ENCODE measurements at regions of chr7 and their contacts with region 1.

Region 1: DNA sequence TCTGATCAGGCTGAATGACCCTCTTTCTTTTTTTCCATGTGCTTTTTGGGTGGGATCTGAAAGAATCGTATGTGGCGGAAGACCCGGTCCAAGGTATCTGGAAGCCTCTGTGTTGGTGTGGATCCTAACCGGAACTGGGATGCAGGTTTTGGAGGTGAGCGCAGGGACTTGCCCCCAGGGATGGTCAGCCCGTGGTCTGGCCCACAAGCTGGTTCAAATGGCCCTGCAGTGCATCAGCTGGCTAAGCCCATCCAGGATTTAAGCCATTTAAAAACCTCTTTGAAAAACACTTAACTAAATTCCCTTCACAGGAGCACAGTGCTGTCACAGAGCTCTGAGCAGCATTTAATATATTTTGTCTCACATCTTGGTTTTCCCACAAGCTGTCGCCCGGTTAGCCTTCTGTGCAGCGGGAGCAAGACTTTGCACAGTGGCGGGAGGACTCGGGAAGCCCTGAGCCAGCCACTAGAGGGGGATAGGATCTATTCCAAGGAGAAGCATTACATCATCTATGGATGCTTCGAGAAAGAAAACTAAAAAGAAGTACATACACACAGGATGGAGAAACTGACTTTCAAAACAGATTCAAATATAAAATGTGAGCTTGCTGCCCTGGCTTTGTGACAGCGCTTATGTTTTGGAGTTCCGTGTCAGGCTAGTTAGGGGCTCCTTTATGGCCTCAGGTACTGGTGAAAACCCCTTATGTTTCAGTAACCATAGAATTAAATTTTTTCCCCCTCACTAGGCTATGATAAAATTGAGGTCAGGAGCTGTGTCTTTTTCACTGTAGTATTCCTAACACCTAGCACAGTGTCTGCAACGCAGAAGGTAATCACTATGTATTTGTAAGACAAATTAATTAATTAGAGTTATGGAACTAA is 11.3 kb downstream of the CPA2 start:
- DNase-seq: peak; percentile 70
- H3K4me3 ChIP-seq: no peak overlapping the region
- H3K27ac ChIP-seq: no peak overlapping the region
- H3K4me1 ChIP-seq: peaks cover 8% of the 10 kb centered on the region
- H3K27me3 ChIP-seq: no peaks in the 10 kb centered on the region
- CTCF ChIP-seq: peak; percentile 40 to 49 (median 42)
- POLR2A ChIP-seq: no peak

Region 2: DNA sequence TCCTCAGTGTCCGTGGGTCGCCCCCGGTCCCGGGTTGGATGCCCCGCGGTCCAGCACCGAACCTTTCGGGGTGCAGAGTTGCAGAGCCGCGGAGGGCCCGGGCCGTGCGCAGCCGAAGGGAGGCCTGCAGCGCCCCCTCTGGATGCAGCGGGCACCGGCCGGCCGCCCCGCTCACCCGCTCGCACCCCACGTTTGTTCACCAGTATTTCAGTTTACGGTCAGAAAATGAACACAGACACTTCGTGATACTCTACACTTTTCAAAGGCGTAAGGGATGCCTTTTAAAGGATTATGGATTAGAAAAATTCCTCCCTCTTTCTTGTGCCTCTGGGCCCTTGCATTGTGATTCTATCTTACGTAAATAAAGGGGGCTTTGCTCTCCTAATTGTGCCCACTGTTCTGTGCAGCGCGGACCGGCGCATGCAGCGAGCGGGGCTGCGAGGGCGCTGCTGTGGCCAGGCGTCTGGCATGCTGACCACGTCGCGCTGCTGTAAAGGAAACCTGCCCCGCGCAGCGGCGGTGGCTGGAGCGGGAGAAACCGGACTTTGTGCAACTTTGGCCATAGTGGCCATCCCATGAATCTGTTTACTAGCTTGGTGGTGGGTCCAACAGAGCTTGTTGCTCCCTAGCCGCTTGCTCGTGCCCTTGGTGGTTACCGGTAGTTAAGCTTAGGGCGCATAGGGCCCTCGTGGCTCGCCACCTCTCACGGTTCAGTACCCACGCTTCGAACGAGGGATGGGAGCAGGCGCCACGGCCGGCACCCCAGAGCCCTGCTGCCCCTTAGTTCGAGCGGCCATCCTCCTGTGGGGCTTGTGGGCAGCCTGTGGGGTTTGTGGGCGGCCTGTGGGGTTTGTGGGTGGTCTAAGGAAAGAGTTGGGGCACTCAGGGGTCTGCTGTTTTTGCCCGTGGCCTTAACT is 213.1 kb after region 1 on chr7:
- intact Hi-C with region 1: loop called (anchors 10 kb)
- DNase-seq: peak; percentile 72
- H3K4me3 ChIP-seq: peak overlapping the region; percentile 46 to 59
- H3K27ac ChIP-seq: peak overlapping the region; percentile 31 to 55
- H3K4me1 ChIP-seq: peaks cover 32% of the 10 kb centered on the region
- H3K27me3 ChIP-seq: no peaks in the 10 kb centered on the region
- CTCF ChIP-seq: peak; percentile 32 to 72 (median 62)
- POLR2A ChIP-seq: no peak

Region 3: DNA sequence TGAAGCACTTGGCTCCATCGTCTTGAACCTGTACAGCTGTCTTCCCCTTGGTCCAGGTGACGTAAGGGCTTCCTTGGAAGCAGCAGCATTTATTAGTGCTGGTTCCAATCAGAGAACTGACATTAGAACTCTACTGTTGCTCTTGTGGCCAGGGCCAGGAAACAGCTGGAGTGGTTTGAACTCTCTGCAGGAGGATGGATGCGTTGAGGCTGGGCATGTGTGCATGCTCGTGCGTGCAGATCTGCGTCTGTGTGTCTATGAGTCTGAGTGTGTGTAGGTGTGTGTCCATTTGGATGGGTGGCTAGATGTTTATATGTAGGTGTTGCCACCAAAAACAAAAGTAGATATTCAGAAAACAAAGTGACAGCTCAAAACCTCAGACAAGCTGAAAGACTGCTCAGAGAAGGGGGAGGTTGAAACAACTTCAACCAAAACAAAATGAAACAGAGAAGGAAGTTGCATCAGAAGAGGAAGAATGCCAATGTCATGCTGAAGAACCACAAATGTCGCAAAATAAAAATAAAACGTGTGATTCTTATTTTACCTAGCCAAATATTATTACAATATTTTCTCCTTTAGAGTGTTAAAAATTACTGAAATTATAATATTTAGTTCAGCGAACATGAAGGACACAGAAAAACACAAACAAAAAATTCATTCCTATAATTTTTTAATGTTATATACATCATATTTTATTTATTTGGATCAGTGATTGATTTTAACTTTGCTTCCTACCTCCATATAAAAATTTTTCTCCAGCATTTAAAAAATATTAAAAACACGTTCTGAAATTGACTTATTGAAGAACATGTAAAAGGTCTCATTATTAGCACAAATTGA is 953.6 kb after region 1 on chr7:
- intact Hi-C with region 1: no loop called
- DNase-seq: peak; percentile 22
- H3K4me3 ChIP-seq: no peak overlapping the region
- H3K27ac ChIP-seq: no peak overlapping the region
- H3K4me1 ChIP-seq: peaks cover 15% of the 10 kb centered on the region
- H3K27me3 ChIP-seq: no peaks in the 10 kb centered on the region
- CTCF ChIP-seq: no peak
- POLR2A ChIP-seq: no peak

Measured in testis (tissue), 5 donors.